HEK293T (cell line): ENCODE measurements at regions of chr14 and their contacts with region 1.

Region 1: DNA sequence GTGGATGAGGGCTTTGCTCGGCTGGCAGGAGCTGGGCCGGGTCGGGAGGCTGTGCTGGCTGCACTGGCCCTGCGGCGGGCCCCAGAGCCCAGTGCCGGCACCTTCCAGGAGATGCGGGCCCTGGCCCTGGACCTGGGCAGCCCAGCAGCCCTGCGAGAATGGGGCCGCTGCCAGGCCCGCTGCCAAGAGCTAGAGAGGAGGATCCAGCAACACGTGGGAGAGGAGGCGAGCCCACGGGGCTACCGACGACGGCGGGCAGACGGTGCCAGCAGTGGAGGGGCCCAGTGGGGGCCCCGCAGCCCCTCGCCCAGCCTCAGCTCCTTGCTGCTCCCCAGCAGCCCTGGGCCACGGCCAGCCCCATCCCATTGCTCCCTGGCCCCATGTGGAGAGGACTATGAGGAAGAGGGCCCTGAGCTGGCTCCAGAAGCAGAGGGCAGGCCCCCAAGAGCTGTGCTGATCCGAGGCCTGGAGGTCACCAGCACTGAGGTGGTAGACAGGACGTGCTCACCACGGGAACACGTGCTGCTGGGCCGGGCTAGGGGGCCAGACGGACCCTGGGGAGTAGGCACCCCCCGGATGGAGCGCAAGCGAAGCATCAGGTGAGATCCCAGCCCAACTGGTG is 11.5 kb downstream of the ARHGEF40 start:
- DNase-seq: no peak

Region 2: DNA sequence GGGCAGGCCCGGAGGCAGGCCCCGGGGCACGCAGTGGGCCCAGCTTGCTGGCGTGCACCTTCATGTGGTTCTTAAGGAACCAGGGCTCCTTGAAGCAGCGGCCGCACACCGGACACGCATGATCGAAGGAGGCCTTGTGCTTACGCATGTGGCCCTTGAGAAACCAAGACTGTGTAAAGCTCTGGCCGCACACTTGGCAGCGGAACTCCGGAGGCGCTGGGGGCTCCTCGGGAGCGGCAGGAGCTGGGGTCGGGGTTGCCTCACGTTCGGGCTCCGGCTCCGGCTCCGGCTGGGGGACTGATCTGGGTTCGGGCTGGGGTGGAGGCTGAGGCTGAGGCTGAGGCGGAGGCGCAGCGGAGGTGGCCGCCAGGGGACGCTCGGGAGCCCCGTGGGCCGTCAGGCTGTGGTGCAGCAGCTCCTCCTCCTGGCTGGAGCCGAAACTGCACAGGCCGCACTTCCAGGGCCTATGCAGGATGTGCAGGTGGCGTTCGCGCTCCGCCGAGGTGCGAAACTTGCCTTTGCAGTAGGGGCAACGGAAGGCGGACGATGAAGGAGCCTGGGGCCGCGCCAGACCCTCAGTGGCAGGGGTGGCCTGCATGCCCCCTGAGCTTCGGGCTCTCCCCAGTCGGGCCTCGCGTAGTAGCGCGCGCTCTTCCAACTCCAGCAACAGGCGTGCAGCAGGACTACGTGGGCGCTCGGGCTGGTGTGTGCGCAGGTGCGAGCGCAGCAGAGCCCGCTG is 10.8 kb after region 1 on chr14:
- CTCF ChIA-PET with region 1: interaction called, 10 read pairs
- POLR2A ChIA-PET with region 1: no interaction called
- DNase-seq: peak; percentile 88